ENCODE measurements at regions of chr6 and their contacts with region 1.

Region 1: GRCh38 chr6:6331946-6332601 is 11.6 kb upstream of the F13A1 start:
- DNase-seq: peak; percentile 94
- H3K4me3 ChIP-seq: peak overlapping the region; percentile 64
- H3K27ac ChIP-seq: peak overlapping the region; percentile 97
- H3K4me1 ChIP-seq: peaks cover 77% of the 10 kb centered on the region
- CTCF ChIP-seq: no peak

Region 2: GRCh38 chr6:6246544-6246943 is 85.5 kb before region 1 on chr6:
- CTCF ChIA-PET with region 1: no interaction called
- POLR2A ChIA-PET with region 1: interaction called, 6 read pairs
- intact Hi-C with region 1: loop called (anchors 2 kb)
- DNase-seq: peak; percentile 90
- H3K4me3 ChIP-seq: peak overlapping the region; percentile 39
- H3K27ac ChIP-seq: peak overlapping the region; percentile 46
- H3K4me1 ChIP-seq: peaks cover 42% of the 10 kb centered on the region
- CTCF ChIP-seq: no peak

Region 3: GRCh38 chr6:6277413-6277812 is 54.7 kb before region 1 on chr6:
- CTCF ChIA-PET with region 1: no interaction called
- POLR2A ChIA-PET with region 1: no interaction called
- intact Hi-C with region 1: no loop called
- DNase-seq: no peak
- H3K4me3 ChIP-seq: no peak overlapping the region
- H3K27ac ChIP-seq: no peak overlapping the region
- H3K4me1 ChIP-seq: no peaks in the 10 kb centered on the region
- CTCF ChIP-seq: no peak

Region 4: GRCh38 chr6:6362056-6362840 is 30.2 kb after region 1 on chr6:
- CTCF ChIA-PET with region 1: no interaction called
- POLR2A ChIA-PET with region 1: interaction called, 22 read pairs
- intact Hi-C with region 1: no loop called
- DNase-seq: peak; percentile 75
- H3K4me3 ChIP-seq: peak overlapping the region; percentile 34
- H3K27ac ChIP-seq: peak overlapping the region; percentile 64
- H3K4me1 ChIP-seq: peaks cover 38% of the 10 kb centered on the region
- CTCF ChIP-seq: no peak

Region 5: DNA sequence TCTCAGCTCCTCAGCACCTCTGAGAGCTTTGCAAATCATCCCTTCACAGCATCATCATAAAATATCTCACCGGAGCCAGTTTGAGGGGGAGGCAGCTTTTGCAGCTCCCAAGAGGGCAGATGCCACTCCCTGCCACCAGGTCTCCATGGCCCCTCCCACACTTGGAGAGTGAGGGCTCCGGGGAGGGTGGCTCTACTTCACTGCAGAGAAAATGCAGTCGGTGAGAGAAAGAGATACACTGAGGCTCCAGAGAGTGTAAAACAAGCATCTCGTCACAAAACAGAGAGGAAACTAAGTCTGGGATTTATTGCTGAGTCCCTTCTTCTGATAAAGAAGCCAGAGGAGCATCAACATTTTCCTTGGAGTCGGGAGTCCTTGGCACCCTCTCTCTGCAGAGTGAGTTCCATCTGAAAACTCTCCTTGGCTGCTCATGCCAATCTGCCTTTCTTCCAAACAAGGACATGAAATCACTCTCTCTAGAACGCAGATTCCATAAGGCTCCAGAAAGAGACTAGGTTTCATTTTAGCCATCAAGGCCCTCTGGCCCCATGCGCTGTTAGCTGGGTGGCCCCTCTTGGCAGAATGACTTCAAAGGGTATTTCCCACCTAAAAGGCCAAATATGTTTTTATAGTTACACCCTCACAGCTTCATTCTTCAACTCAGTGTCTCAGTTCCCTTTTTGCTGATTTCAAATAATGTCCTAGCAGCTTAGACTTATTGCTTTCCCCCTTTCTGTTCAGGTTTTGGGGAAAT is 59.0 kb after region 1 on chr6:
- CTCF ChIA-PET with region 1: no interaction called
- POLR2A ChIA-PET with region 1: interaction called, 59 read pairs
- intact Hi-C with region 1: loop called (anchors 1 kb)
- DNase-seq: peak; percentile 90
- H3K4me3 ChIP-seq: peak overlapping the region; percentile 61
- H3K27ac ChIP-seq: peak overlapping the region; percentile 92
- H3K4me1 ChIP-seq: peaks cover 100% of the 10 kb centered on the region
- CTCF ChIP-seq: no peak

Region 6: GRCh38 chr6:6494677-6495076 is 162.6 kb after region 1 on chr6:
- CTCF ChIA-PET with region 1: no interaction called
- POLR2A ChIA-PET with region 1: interaction called, 7 read pairs
- intact Hi-C with region 1: loop called (anchors 1 kb)
- DNase-seq: peak; percentile 85
- H3K4me3 ChIP-seq: no peak overlapping the region
- H3K27ac ChIP-seq: peak overlapping the region; percentile 55
- H3K4me1 ChIP-seq: peaks cover 24% of the 10 kb centered on the region
- CTCF ChIP-seq: peak; percentile 99